ENCODE measurements at regions of chr17 and their contacts with region 1.

Region 1: GRCh38 chr17:81553018-81553615 is 964 bp upstream of the FAAP100 start:
- DNase-seq: peak; percentile 48 to 92 (median 72)
- ATAC-seq: peak; percentile 74
- H3K4me3 ChIP-seq: peak overlapping the region; percentile 94
- H3K4me3 Mint-ChIP-seq: peak overlapping the region; percentile 94
- H3K27ac ChIP-seq: peak overlapping the region; percentile 79 to 83
- H3K27ac Mint-ChIP-seq: peak overlapping the region; percentile 93
- H3K4me1 ChIP-seq: peaks cover 41% of the 10 kb centered on the region
- H3K4me1 Mint-ChIP-seq: peaks cover 30% of the 10 kb centered on the region
- H3K27me3 ChIP-seq: no peaks in the 10 kb centered on the region
- H3K27me3 Mint-ChIP-seq: no peaks in the 10 kb centered on the region
- CTCF ChIP-seq: peak; percentile 0

Region 2: DNA sequence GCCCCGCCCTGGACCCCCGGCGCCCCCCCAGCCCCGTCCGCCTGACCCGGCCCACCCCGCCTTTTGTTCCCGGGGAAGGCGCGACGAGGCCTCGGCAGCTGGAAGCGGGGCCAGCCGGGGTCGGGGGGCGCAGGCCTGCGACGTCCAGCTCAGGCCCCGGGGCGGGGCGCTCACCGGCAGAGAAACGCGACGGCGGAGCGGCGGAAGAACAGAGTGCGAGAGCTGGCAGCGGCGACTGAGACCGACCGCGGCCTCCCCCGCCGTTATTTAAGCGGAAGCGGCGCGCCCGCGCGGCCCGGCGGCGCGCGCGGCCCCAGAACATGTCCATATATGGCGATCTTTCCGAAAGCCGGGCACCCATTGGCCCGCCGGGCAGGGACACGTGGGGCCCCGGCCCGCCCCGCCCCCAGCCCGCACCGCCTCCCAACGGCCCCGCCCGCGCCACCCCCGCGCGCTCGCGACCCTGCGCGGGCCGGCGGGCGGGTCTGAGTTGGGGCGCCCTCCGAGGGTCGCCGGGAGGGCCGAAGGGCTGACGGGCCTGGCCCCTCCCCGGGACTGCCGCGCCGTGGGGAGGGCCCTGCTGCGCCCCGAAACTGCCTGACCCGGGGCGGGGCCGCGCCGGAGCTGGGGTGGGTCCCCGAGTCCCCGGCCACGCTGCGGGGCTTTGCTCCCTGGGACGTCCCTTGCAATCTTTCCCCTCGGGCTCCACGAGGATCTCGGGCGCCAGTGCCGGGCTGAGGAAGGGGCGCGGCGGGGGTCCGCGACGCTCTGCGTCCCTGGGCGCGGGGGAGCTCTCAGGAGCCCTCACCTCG is 40.4 kb before region 1 on chr17 and contains the start of gene ACTG1:
- CTCF ChIA-PET with region 1: no interaction called
- POLR2A ChIA-PET with region 1: interaction called, 93 read pairs
- intact Hi-C with region 1: loop called in 1 of 2 experiments (anchors 2 kb)
- DNase-seq: peak; percentile 84 to 96 (median 92)
- ATAC-seq: peak; percentile 66
- H3K4me3 ChIP-seq: peak within 1 kb of the TSS; percentile 98
- H3K4me3 Mint-ChIP-seq: peak within 1 kb of the TSS; percentile 99
- H3K27ac ChIP-seq: peak within 1 kb of the TSS; percentile 72 to 87
- H3K27ac Mint-ChIP-seq: peak within 1 kb of the TSS; percentile 90
- H3K4me1 ChIP-seq: peaks cover 72% of the 10 kb centered on the region
- H3K4me1 Mint-ChIP-seq: peaks cover 57% of the 10 kb centered on the region
- H3K27me3 ChIP-seq: no peaks in the 10 kb centered on the region
- H3K27me3 Mint-ChIP-seq: no peaks in the 10 kb centered on the region
- CTCF ChIP-seq: no peak
- total RNA-seq, gene ACTG1: 1,296 to 1,318 TPM

Region 3: DNA sequence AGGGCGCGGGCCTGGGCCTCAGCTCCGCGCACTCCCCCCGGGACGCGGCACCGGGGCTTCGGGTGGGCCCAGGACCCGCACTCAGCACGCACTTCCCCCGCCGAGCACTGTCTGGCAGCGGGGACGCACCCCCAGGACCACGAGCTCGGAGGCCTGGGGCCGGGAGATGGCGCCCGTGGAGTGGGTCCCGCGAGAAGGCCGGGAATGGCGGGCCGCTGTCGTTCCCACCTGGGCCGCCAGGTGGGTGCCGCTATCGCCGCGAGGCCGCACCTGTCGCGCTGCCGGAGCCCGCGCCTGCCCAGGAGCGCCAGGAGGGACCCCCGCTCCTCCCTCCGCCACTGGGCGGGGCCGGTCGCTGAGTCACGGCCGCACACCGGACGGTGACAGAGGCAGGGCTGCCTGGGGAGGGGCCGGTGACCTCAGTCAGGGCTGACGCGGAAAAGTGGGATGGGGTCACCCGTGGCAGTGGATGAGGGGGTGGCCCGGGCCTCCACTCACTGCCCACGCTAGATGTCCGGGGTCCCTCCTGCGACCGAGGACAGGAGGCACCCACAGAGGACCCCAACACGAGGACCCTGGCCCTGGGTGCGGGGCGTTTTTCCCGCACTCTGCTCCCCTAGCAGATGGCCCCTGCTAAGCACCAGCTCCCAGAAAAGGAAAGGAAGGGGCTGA is 33.7 kb before region 1 on chr17:
- CTCF ChIA-PET with region 1: interaction called, 18 read pairs
- POLR2A ChIA-PET with region 1: interaction called, 93 read pairs
- intact Hi-C with region 1: loop called (anchors 1 to 2 kb)
- DNase-seq: peak; percentile 54 to 90 (median 68)
- ATAC-seq: peak; percentile 78
- H3K4me3 ChIP-seq: peak overlapping the region; percentile 48
- H3K4me3 Mint-ChIP-seq: no peak overlapping the region
- H3K27ac ChIP-seq: no peak overlapping the region
- H3K27ac Mint-ChIP-seq: no peak overlapping the region
- H3K4me1 ChIP-seq: peaks cover 47% of the 10 kb centered on the region
- H3K4me1 Mint-ChIP-seq: peaks cover 24% of the 10 kb centered on the region
- H3K27me3 ChIP-seq: peaks cover 8 to 13% of the 10 kb centered on the region in 2 experiments
- H3K27me3 Mint-ChIP-seq: no peaks in the 10 kb centered on the region
- CTCF ChIP-seq: peak; percentile 89